GM13976 (cell line): ENCODE measurements at regions of chr15 and their contacts with region 1.

Region 1: DNA sequence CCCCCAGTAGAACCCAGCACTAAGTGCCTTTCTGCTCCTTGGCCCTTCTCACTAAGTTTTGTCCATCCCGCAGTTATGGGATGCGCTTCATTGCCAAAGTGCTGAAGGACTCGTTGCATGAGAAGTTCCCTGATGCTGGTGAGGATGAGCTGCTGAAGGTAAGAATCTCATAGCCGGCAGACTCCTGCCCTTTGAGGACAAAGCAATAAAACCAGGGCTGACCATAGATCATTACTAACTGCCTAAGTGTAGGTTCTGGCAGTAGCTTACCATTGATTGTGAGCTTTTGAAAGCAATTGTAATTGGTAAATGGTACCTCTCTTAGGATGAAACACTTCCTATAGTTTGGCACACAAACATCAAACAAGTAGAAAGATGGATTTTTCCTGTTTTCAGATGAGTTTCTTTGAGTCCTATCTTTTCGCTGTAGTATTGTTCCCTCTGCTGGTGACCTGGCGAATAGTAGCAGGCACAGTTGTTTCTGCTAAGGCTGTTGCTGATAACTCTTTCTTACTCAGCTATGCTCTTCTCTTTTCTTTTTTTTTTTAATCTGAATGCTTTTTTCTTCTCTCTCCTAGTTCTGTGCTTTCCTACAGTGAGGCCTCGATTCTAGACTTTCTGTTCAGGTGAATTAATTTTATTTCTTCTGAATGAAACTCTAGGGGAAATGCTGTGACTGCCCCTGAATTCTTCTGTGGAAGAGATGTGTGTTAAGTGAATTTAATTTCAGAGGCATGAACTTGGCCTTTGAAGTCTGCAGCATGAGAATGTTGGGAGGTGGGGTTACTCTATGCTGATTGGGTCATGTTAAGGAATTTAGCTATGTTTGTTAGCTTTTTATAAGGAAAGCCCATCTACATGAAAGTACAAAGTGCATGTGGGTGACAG is 47.4 kb upstream of the CRTC3 start:
- DNase-seq: peak; percentile 45
- CTCF ChIP-seq: peak; percentile 60

Region 2: GRCh38 chr15:90131848-90132247 is 350.5 kb before region 1 on chr15:
- in situ Hi-C with region 1: no loop called
- DNase-seq: no peak
- CTCF ChIP-seq: no peak

Region 3: GRCh38 chr15:90320061-90320884 is 162.1 kb before region 1 on chr15:
- in situ Hi-C with region 1: loop called (anchors 10 kb)
- DNase-seq: peak; percentile 88
- CTCF ChIP-seq: peak; percentile 97